ENCODE measurements at regions of chr18 and their contacts with region 1.

Region 1: DNA sequence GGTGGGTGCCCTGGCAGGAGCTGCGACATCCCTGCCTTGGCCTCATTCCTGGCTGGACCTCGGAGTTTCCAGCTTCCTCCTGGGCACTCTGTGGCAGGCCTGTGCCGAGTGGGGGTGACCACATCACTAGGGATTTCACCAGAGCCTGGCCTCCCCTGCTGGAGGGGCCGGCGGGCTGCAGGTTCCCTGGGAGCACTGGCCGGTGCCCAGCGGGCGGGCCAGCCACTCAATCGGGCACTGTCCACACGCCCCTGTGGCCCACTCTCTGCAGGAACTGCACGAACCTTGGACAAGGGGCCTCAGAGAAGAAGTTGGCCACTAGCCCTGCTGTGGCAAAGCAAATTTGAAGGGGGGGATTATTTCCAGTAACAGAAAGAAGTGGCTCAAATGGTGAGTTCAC is 110.7 kb upstream of the APCDD1 start:
- DNase-seq: no peak

Region 2: GRCh38 chr18:10299643-10300042 is 44.1 kb before region 1 on chr18:
- intact Hi-C with region 1: loop called in 1 of 2 experiments (anchors 1 kb)
- DNase-seq: no peak